Right ventricle myocardium superior (tissue), 1 donor: ENCODE measurements at regions of chr2 and their contacts with region 1.

Region 1: GRCh38 chr2:24409700-24410556 is 49.6 kb upstream of the ITSN2 start:
- DNase-seq: no peak
- ATAC-seq: peak; percentile 91

Region 2: GRCh38 chr2:24827321-24828237 is 417.7 kb after region 1 on chr2:
- intact Hi-C with region 1: loop called (anchors 2 kb)
- DNase-seq: peak; percentile 83
- ATAC-seq: peak; percentile 93